WTC11 (cell line): ENCODE measurements at regions of chr14 and their contacts with region 1.

Region 1: DNA sequence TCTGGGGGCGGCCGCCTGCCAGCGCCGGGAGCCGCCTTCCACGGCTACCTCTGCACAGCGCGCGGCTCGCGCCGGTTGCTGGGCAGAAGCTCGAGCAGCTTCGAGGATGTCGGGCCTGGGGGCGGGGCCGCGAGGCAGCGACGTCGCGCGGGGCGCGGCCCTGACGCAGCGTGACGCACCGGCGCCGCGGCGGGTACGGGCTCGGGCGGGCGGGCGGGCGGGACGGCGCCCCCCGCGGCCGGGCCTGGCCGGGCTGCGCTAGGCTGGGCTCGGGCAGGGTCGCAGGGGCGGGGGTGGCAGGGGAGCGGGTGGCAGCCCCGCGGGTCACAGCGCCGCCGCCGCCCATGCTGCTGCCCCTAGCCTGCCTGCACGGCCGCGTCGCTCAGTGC is at the start of gene BTBD6:
- DNase-seq: peak; percentile 73
- ATAC-seq: peak; percentile 80
- H3K4me3 Mint-ChIP-seq: peak within 1 kb of the TSS; percentile 75
- H3K27ac Mint-ChIP-seq: peak within 1 kb of the TSS; percentile 72; the same call in 1 of the 2 replicates
- H3K4me1 Mint-ChIP-seq: peaks cover 5% of the 10 kb centered on the region
- H3K27me3 Mint-ChIP-seq: no peaks in the 10 kb centered on the region; the same call in 1 of the 2 replicates
- CTCF ChIP-seq: no peak
- total RNA-seq, gene BTBD6: 7.8 to 10.0 TPM (median 8.3 TPM) in 3 replicates

Region 2: GRCh38 chr14:105153271-105153731 is 95.1 kb before region 1 on chr14:
- CTCF ChIA-PET with region 1: no interaction called
- POLR2A ChIA-PET with region 1: no interaction called
- DNase-seq: no peak
- ATAC-seq: no peak
- H3K4me3 Mint-ChIP-seq: no peak overlapping the region
- H3K27ac Mint-ChIP-seq: no peak overlapping the region
- H3K4me1 Mint-ChIP-seq: no peaks in the 10 kb centered on the region
- H3K27me3 Mint-ChIP-seq: no peaks in the 10 kb centered on the region
- CTCF ChIP-seq: no peak

Region 3: DNA sequence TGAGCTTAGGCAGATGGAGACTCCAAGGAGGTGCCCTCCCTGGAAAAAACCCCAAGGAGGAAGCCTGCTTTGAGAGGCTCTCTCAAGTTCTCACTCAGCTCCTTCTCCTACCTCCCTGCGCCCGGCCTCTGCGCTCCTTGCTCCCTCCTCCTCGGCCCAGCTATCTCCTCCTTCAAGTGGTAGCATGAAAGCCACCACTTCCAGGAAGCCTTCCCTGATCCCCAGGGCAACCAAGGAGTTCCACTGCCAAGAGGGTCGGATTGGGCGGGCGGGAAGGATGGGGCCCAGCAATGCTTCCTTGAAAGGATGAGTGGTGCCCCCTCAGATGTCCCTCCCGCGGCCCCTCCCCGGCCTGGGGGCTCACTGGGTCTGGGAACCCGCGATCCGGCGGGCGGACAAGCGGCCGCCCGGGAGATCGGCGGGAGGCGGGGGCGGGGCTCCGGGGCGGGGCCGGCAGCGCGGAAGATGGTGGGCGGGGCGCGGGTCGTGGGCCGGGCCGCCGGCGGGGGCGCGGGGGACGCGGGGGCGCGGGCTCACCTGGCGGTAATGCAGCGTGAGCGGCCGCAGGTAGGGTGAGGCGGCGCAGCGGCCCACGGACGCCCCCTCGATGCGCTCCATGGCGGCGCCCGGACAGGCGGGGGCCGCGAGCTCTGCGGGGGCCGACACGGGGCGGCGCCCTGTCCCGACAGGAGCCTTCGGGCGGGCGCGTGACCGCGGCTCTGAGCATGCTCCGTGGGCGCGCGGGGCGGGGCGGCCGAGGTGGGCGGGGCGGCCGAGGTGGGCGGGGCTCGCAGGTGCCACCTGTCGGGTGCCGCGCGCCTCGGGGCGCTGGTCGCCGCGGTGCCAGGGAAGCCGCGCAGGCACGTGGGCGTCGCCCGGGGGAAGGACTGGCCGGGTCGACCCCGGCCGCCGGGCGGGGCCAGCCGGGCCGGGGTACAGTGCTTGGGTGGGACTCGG is 67.5 kb before region 1 on chr14 and contains the start of gene NUDT14:
- CTCF ChIA-PET with region 1: interaction called, 10 read pairs
- POLR2A ChIA-PET with region 1: no interaction called
- DNase-seq: peak; percentile 78
- ATAC-seq: peak; percentile 66
- H3K4me3 Mint-ChIP-seq: peak within 1 kb of the TSS; percentile 71
- H3K27ac Mint-ChIP-seq: no peak within 1 kb of the TSS
- H3K4me1 Mint-ChIP-seq: peaks cover 3% of the 10 kb centered on the region; the same call in 1 of the 2 replicates
- H3K27me3 Mint-ChIP-seq: peaks cover 24% of the 10 kb centered on the region
- CTCF ChIP-seq: no peak
- total RNA-seq, gene NUDT14: 35.4 to 56.2 TPM (median 51.3 TPM) in 3 replicates

Region 4: GRCh38 chr14:105300792-105301533 is 52.6 kb after region 1 on chr14 and contains the start of gene BRF1:
- CTCF ChIA-PET with region 1: interaction called, 3 read pairs
- POLR2A ChIA-PET with region 1: interaction called, 10 read pairs
- DNase-seq: peak; percentile 100
- ATAC-seq: peak; percentile 89
- H3K4me3 Mint-ChIP-seq: peak within 1 kb of the TSS; percentile 91
- H3K27ac Mint-ChIP-seq: peak within 1 kb of the TSS; percentile 98
- H3K4me1 Mint-ChIP-seq: peaks cover 13% of the 10 kb centered on the region
- H3K27me3 Mint-ChIP-seq: peaks cover 40% of the 10 kb centered on the region
- CTCF ChIP-seq: no peak
- total RNA-seq, gene BRF1: 23.9 to 26.5 TPM (median 26.4 TPM) in 3 replicates

Region 5: DNA sequence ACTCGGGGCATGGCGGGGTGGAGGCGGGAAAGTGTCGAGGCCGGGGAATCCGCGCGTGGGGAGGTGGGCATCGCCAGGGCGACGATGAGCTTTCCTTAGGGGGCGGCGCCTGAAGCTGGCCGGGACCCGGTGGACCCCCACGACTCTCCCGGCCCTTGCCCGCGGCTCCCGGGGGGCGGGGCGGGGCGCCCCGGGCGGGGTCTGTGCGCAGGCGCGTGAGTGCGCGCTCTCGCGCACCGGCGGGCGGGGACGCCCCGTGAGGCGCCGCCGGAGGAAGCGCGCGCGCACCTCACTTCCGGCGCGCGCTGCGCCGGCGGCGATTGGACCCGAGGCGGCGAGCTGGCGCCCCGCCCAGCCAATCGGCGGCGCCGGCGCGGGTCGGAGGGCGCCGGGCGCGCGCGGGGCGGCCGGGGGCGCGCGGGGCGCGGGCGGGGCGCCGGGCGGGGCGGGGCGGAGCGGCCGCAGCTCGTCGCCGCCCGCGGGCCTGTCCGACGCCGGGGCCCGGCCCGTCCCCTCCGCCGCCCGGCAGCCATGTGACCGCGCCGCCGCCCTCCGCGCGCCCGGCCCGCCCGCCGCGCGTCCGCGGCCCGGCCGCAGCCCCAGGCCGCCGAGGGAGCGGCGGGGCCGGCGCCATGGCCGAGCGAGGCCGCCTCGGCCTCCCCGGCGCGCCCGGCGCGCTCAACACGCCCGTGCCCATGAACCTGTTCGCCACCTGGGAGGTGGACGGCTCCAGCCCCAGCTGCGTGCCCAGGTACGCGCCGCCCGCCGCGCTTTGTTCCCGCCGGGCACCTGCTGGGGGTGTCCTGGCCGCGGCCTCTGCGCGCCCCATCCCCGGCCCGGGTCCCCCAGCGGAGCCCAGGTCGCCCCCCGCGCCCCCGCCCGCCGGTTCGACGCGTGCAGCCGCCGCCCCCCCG is 66.2 kb after region 1 on chr14 and contains the start of gene PACS2:
- CTCF ChIA-PET with region 1: no interaction called
- POLR2A ChIA-PET with region 1: no interaction called
- DNase-seq: peak; percentile 63
- ATAC-seq: peak; percentile 72
- H3K4me3 Mint-ChIP-seq: peak within 1 kb of the TSS; percentile 84
- H3K27ac Mint-ChIP-seq: no peak within 1 kb of the TSS
- H3K4me1 Mint-ChIP-seq: peaks cover 17% of the 10 kb centered on the region
- H3K27me3 Mint-ChIP-seq: no peaks in the 10 kb centered on the region; the same call in 1 of the 2 replicates
- CTCF ChIP-seq: no peak
- total RNA-seq, gene PACS2: 90.7 to 100 TPM (median 98.0 TPM) in 3 replicates

Region 6: GRCh38 chr14:105333613-105334364 is 85.4 kb after region 1 on chr14:
- CTCF ChIA-PET with region 1: interaction called, 11 read pairs
- POLR2A ChIA-PET with region 1: no interaction called
- DNase-seq: no peak
- ATAC-seq: no peak
- H3K4me3 Mint-ChIP-seq: no peak overlapping the region
- H3K27ac Mint-ChIP-seq: no peak overlapping the region
- H3K4me1 Mint-ChIP-seq: peaks cover 23% of the 10 kb centered on the region
- H3K27me3 Mint-ChIP-seq: no peaks in the 10 kb centered on the region
- CTCF ChIP-seq: no peak

Region 7: DNA sequence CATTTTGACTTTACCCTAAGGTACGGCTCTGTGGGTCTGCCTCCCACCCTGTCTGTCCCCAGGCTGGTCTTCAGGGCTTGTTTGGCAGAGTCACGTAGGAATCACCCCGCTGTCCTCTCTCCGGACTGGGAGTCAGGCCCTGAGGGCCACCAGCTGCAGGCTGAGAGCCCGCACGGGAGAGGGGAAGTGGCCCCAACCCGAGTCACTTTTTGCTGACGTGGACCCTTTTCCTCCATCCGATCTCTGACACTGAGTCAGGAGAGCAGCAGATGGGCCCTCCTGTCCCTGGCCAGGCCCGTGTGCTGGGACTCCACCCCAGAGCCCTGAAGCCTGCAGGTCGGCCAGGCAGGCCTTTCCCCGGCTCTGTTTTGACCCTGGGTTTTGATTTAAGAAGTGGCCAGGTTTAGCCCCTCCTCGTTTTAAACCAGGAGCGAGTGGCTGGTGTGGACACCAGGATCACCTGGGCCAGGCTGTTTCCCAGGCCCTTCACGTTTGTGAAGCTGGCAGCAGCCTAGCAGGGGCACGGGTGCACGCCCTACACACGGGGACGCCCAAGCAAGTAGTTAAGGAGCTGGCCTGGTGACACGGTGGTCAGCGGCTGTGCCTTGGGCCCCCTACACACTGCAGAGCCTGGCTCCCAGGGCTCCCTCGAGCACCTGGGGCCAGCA is 137.5 kb after region 1 on chr14:
- CTCF ChIA-PET with region 1: no interaction called
- POLR2A ChIA-PET with region 1: no interaction called
- DNase-seq: no peak
- ATAC-seq: no peak
- H3K4me3 Mint-ChIP-seq: no peak overlapping the region
- H3K27ac Mint-ChIP-seq: no peak overlapping the region
- H3K4me1 Mint-ChIP-seq: no peaks in the 10 kb centered on the region
- H3K27me3 Mint-ChIP-seq: no peaks in the 10 kb centered on the region
- CTCF ChIP-seq: no peak

Region 8: GRCh38 chr14:105568859-105569708 is 320.7 kb after region 1 on chr14:
- CTCF ChIA-PET with region 1: no interaction called
- POLR2A ChIA-PET with region 1: no interaction called
- DNase-seq: no peak
- ATAC-seq: no peak
- H3K4me3 Mint-ChIP-seq: no peak overlapping the region
- H3K27ac Mint-ChIP-seq: no peak overlapping the region
- H3K4me1 Mint-ChIP-seq: no peaks in the 10 kb centered on the region
- H3K27me3 Mint-ChIP-seq: peaks cover 10% of the 10 kb centered on the region
- CTCF ChIP-seq: no peak